ENCODE measurements at regions of chr2 and their contacts with region 1.

Region 1: GRCh38 chr2:75157430-75157829 is 41.9 kb downstream of the TACR1 start:
- DNase-seq: no peak
- H3K4me3 Mint-ChIP-seq: no peak overlapping the region
- H3K27ac Mint-ChIP-seq: no peak overlapping the region
- H3K4me1 Mint-ChIP-seq: peaks cover 6% of the 10 kb centered on the region
- H3K27me3 Mint-ChIP-seq: peaks cover 10% of the 10 kb centered on the region
- CTCF ChIP-seq: no peak

Region 2: GRCh38 chr2:75064691-75065396 is 92.6 kb before region 1 on chr2:
- CTCF ChIA-PET with region 1: no interaction called
- intact Hi-C with region 1: no loop called
- DNase-seq: peak; percentile 75
- H3K4me3 Mint-ChIP-seq: no peak overlapping the region
- H3K27ac Mint-ChIP-seq: no peak overlapping the region
- H3K4me1 Mint-ChIP-seq: no peaks in the 10 kb centered on the region
- H3K27me3 Mint-ChIP-seq: peaks cover 20% of the 10 kb centered on the region
- CTCF ChIP-seq: peak; percentile 76

Region 3: DNA sequence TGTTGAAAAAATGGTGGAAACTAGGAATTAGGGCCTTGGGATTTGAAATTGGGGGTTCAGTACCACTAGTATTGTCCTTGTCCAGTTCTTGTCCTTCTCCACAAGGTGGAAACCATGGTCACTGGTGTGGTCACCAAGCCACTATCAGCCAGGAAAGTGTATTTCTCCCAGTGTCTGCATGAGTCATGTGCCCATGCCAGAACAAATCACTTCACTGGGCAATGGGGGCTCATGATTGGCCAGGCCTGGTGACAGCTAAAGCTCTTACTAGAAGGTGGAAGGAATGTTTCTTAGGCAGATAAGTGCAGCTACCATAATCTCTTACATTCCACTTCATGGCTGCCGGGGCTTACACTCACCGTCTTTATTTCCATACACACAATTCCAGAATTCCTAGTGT is 166.7 kb after region 1 on chr2:
- CTCF ChIA-PET with region 1: no interaction called
- intact Hi-C with region 1: no loop called
- DNase-seq: no peak
- H3K4me3 Mint-ChIP-seq: no peak overlapping the region
- H3K27ac Mint-ChIP-seq: no peak overlapping the region
- H3K4me1 Mint-ChIP-seq: no peaks in the 10 kb centered on the region
- H3K27me3 Mint-ChIP-seq: no peaks in the 10 kb centered on the region
- CTCF ChIP-seq: no peak

Region 4: DNA sequence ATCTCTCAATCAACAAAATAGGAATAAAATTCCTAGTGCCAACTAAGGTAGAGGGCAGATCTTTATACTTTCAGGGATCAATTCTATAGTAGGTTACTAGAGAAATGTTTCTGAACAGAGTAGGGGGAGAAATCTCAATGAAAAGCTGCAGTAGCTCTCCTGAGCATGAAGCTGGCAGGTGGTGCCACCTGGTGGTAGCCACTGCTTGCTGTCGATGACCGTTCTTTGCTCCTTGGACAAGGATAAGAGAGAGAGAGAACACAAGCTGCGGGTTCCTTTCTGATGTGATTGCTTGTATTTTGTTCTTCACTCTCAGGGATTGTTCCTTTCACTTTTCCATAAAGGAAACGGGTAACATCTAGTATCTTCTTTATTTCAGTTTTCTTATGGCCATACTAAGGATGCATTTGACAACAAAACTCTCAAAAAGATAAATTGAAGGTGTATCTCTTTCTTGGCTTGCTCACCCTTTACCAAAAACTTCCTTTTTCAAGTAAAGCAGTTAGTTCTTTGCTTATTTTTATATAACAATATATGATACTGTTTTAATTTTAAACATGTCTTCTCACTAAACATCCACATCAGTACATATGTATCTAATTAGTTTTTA is 470.6 kb after region 1 on chr2:
- CTCF ChIA-PET with region 1: no interaction called
- intact Hi-C with region 1: loop called (anchors 10 kb)
- DNase-seq: peak; percentile 82
- H3K4me3 Mint-ChIP-seq: no peak overlapping the region
- H3K27ac Mint-ChIP-seq: no peak overlapping the region
- H3K4me1 Mint-ChIP-seq: no peaks in the 10 kb centered on the region
- H3K27me3 Mint-ChIP-seq: peaks cover 18% of the 10 kb centered on the region
- CTCF ChIP-seq: peak; percentile 82

Measured in Calu3 (cell line).